Posterior cingulate gyrus (tissue), 11 donors: ENCODE measurements at regions of chr10 and their contacts with region 1.

Region 1: DNA sequence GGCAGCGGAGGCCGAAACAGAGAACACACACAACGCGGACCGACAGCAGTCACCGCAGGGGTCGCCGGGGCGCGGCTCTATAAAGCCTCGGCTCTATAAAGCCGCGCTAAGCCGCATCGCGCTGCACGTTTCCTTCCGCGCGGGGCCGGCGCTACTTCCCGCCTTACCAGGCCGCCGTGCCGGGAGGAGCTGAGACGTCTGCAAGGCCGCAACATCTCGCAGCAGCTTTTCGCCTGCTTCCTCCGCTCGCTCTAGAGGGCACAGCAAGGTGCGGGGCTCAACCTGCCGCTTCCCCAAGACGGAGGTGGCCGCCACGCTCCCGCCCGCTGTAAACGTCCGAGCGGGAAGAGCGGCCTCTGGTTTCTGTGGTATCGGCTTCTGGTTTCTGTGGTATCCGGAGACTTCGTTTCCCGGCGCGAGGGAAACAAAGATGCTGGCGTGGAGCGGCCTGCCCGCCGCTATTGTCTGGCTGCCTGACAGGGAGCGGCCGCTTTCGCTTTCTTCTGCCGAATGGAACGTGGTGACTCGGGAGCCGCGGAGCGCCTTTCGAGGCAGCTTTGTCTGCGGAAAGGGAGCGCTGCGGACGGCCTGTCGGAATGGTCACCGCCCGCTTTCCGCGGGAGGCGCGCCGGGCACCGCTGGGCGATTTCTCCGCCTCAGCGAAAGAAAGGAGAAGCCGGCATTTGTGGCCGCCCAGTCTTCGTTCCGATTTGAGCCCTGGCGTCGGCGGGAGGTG is 91.8 kb downstream of the SPAG6 start:
- DNase-seq: peak; percentile 66 to 98 (median 86)

Region 2: GRCh38 chr10:21797984-21798765 is 638.9 kb before region 1 on chr10:
- intact Hi-C with region 1: no loop called
- DNase-seq: no peak

Region 3: GRCh38 chr10:22003079-22003913 is 433.8 kb before region 1 on chr10 and contains the start of gene DNAJC1:
- intact Hi-C with region 1: loop called (anchors 10 kb)
- DNase-seq: peak; percentile 97 to 100 (median 98)

Region 4: DNA sequence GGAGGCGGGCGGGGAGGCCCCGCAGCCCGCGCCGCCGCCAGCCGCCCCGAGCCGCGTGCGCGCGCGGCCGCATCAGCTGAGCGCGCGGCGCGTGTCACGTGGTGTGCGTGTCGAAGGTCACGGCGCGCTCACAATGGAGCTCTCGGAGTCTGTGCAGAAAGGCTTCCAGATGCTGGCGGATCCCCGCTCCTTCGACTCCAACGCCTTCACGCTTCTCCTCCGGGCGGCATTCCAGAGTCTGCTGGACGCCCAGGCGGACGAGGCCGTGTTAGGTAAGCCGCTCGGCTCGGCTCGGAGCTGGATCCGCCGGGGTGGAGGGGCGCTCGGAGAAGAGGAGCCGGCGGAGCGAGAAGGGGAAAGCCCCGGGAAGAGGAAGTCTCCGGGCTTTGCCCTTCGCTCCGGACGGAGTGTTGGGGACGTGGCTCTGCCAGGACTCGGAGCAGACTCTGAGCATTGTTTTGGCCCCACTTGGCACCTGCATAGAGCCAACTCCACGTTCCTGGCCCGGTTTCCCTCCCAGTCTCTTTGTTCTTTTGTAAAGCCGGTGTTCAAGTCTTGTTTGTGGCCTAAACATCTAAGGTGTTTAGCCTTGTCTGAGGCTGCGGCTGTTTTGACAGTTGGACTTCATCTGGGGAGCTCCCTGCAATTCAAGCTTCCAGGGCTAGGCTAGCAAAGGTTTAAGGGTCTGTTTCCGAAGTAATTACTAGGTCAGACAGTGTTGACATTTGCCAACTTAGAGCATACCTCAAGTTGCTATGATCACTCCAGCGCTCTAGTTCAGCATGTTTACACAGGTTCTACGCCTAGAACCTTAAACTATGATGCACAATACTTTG is 120.5 kb before region 1 on chr10 and contains the start of gene COMMD3:
- intact Hi-C with region 1: loop called (anchors 5 kb)
- DNase-seq: peak; percentile 79 to 97 (median 86)

Region 5: GRCh38 chr10:22534849-22535604 is 98.0 kb after region 1 on chr10:
- intact Hi-C with region 1: loop called (anchors 10 kb)
- DNase-seq: no peak